ENCODE measurements at regions of chr4 and their contacts with region 1.

Region 1: DNA sequence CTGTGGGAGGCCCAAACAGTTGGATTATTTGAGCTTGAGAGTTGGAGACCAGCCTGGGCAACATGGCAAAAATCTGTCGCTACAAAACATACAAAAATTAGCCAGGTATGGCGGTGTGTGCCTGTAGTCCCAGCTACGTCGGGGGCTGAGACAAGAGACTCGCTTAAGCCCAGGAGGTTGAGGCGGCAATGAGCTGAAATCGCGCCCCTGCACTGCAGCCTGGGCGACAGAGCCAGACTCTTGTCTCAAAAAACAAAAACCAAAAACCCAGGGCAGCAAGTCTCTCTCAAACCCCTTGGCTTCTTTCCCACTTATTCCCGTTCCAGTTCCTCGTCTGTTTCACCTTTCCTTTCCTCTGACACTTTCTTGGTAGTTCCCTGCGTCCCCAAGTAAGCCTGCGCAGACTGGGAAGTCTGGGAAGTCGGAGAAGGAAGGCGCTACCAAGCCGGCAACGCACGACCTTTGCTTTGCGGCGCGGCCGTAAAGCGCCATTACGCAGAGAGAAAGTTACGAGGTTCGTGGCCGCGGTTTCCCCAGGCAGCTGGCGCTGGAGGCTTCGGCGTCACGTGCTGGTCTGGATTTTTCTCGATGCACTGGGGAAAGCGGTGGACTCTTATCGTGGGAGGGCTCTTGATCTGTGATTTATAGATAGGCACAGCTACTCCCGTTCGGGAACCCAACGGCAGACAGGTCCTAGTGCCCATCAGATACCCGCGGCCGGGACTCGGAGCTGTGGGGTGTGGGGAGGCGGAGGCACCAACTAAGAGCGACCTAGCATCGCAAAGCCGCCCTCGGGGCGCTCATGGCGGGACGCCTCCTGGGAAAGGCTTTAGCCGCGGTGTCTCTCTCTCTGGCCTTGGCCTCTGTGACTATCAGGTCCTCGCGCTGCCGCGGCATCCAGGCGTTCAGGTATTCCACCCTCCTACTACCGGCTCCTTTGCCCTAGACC is at the start of gene NUDT9:
- DNase-seq: peak; percentile 74 to 92 (median 89)
- ATAC-seq: peak; percentile 92
- H3K4me3 ChIP-seq: peak within 1 kb of the TSS; percentile 96
- H3K4me3 Mint-ChIP-seq: peak within 1 kb of the TSS; percentile 94 to 100 (median 98)
- H3K27ac ChIP-seq: peak within 1 kb of the TSS; percentile 85
- H3K27ac Mint-ChIP-seq: peak within 1 kb of the TSS; percentile 97 to 100 (median 99)
- H3K4me1 ChIP-seq: peaks cover 17% of the 10 kb centered on the region in 2 donors
- H3K4me1 Mint-ChIP-seq: peaks cover 14 to 59% (median 48%) of the 10 kb centered on the region in 7 donors
- H3K27me3 ChIP-seq: no peaks in the 10 kb centered on the region
- H3K27me3 Mint-ChIP-seq: no peaks in the 10 kb centered on the region
- total RNA-seq, gene NUDT9: 9.7 to 18.1 (median 10.5) TPM

Region 2: GRCh38 chr4:87375719-87376291 is 46.6 kb before region 1 on chr4:
- CTCF ChIA-PET with region 1: interaction called, 4 read pairs
- POLR2A ChIA-PET with region 1: interaction called, 3 read pairs
- intact Hi-C with region 1: loop called in 1 of 2 experiments (anchors 1 kb)
- DNase-seq: peak in 4 of 9 donors; percentile 18 to 36 (median 24)
- ATAC-seq: peak; percentile 62
- H3K4me3 ChIP-seq: no peak overlapping the region
- H3K4me3 Mint-ChIP-seq: no peak overlapping the region
- H3K27ac ChIP-seq: no peak overlapping the region
- H3K27ac Mint-ChIP-seq: no peak overlapping the region
- H3K4me1 ChIP-seq: no peaks in the 10 kb centered on the region
- H3K4me1 Mint-ChIP-seq: peaks cover 0 to 9% (median 0%) of the 10 kb centered on the region in 7 donors
- H3K27me3 ChIP-seq: no peaks in the 10 kb centered on the region
- H3K27me3 Mint-ChIP-seq: no peaks in the 10 kb centered on the region

Region 3: GRCh38 chr4:87390891-87391575 is 31.3 kb before region 1 on chr4 and contains the start of gene HSD17B11:
- CTCF ChIA-PET with region 1: interaction called, 4 read pairs
- POLR2A ChIA-PET with region 1: interaction called, 53 read pairs
- intact Hi-C with region 1: loop called (anchors 1 kb)
- DNase-seq: peak; percentile 44 to 83 (median 79)
- ATAC-seq: peak; percentile 99
- H3K4me3 ChIP-seq: peak within 1 kb of the TSS; percentile 85
- H3K4me3 Mint-ChIP-seq: peak within 1 kb of the TSS; percentile 87 to 99 (median 97)
- H3K27ac ChIP-seq: peak within 1 kb of the TSS; percentile 82
- H3K27ac Mint-ChIP-seq: peak within 1 kb of the TSS; percentile 83 to 96 (median 94)
- H3K4me1 ChIP-seq: peaks cover 10 to 17% of the 10 kb centered on the region in 2 donors
- H3K4me1 Mint-ChIP-seq: peaks cover 32 to 66% (median 57%) of the 10 kb centered on the region in 7 donors
- H3K27me3 ChIP-seq: no peaks in the 10 kb centered on the region
- H3K27me3 Mint-ChIP-seq: peaks cover 0 to 14% (median 0%) of the 10 kb centered on the region in 5 donors
- total RNA-seq, gene HSD17B11: 34.3 to 74.4 (median 61.0) TPM

Region 4: DNA sequence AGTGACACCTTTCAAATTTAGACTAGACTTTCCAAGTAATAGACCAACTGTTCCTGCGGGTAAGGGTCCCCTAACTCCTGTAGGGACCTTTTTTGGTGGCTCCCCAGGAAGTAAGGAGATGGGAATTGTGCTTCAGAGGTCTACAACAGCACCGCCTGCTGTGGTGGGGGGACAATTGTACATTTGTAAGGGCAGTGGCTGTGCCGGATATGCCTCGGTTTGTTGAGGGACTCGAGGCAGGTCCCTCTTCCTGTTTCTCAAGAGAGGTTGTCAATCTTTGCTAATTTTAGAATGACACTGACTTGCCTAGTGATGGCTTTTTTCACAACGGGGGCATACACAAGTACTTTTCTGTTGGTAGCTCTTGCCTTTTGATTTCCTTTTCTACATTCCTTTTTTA is 15.9 kb before region 1 on chr4:
- CTCF ChIA-PET with region 1: no interaction called
- POLR2A ChIA-PET with region 1: interaction called, 3 read pairs
- intact Hi-C with region 1: loop called in 1 of 2 experiments (anchors 2 kb)
- DNase-seq: peak in 1 of 9 donors; percentile 18
- ATAC-seq: peak; percentile 31
- H3K4me3 ChIP-seq: no peak overlapping the region
- H3K4me3 Mint-ChIP-seq: peak overlapping the region; percentile 19 to 76 (median 58)
- H3K27ac ChIP-seq: no peak overlapping the region
- H3K27ac Mint-ChIP-seq: peak overlapping the region in 6 of 9 donors; percentile 2 to 82 (median 60)
- H3K4me1 ChIP-seq: no peaks in the 10 kb centered on the region
- H3K4me1 Mint-ChIP-seq: peaks cover 6 to 23% (median 17%) of the 10 kb centered on the region in 7 donors
- H3K27me3 ChIP-seq: no peaks in the 10 kb centered on the region
- H3K27me3 Mint-ChIP-seq: peaks cover 15 to 25% (median 22%) of the 10 kb centered on the region in 5 donors

Measured in naive thymus-derived CD4-positive, alpha-beta T cell (primary cell).